Ovary (tissue), 10 donors: ENCODE measurements at regions of chr1 and their contacts with region 1.

Region 1: DNA sequence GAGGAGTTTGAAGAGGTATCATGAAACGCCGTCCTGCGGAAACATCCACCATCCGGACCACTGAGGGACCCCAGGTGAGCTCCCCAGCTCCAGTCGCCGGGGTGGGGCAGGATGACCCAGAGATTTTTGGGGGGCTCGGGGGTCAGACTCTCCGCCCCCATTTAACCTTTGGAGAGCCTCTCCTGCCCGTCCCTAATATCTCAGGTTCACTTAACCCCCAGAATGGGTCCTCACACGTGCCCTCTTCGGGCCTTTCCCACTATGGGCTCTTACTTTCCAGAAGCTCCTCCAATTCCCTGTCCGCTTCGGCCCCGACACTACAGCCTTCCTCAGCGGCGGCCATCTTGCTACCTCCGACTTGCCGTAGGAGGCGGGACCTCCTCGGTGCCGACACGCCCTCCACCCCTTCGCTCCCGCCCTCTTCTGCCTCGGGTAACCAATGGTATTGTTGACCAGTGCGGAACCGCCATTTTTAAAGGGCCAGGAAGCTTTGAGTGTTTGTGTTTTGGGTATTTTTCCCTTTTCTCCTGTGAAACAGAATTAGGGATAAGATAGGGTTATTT is at the start of gene PEX19:
- DNase-seq: peak; percentile 90 to 96 (median 94)
- H3K4me3 ChIP-seq: peak within 1 kb of the TSS; percentile 82
- H3K27ac ChIP-seq: peak within 1 kb of the TSS; percentile 78 to 80
- H3K4me1 ChIP-seq: peaks cover 7% of the 10 kb centered on the region
- H3K27me3 ChIP-seq: no peaks in the 10 kb centered on the region
- CTCF ChIP-seq: no peak
- EP300 ChIP-seq: no peak
- POLR2A ChIP-seq: peak; percentile 76
- total RNA-seq, gene PEX19: 40.1 to 91.7 (median 70.6) TPM

Region 2: DNA sequence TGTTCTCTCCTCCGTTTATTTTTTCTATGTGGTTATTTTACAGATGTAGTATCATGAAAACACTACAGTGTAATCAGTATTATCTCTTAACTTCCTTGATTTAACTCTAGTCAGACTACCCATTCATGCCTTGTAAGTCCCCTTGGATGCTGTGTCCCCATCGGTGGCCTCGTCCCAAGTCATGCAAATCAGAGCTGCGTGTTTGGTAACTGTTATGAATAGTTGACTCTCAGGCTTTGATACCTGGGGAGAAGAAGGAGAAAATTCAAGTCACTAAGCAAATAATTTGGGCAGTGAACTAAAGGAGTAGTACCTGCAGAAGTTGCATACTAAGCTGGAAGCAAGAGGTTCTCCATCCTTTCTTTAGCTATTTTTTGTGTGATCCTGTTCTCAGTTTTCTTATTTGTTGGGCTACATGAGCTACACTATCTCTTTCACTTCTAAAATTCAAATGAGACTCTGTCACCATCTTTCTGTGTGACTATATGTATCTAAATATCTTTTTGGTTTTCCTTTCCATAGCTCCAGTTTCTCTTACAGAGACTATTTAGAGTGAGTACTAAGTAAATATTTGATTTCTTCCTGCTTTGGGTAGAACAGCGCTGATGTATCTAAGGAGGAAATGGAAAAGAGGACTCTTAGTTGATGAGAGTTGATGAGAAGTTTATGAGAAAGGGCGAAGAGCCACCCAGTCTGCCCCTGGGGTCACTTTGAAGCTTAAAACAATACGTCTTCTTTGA is 166.4 kb after region 1 on chr1:
- intact Hi-C with region 1: no loop called
- DNase-seq: no peak
- H3K4me3 ChIP-seq: no peak overlapping the region
- H3K27ac ChIP-seq: no peak overlapping the region
- H3K4me1 ChIP-seq: no peaks in the 10 kb centered on the region
- H3K27me3 ChIP-seq: no peaks in the 10 kb centered on the region
- CTCF ChIP-seq: no peak
- EP300 ChIP-seq: no peak
- POLR2A ChIP-seq: no peak

Region 3: DNA sequence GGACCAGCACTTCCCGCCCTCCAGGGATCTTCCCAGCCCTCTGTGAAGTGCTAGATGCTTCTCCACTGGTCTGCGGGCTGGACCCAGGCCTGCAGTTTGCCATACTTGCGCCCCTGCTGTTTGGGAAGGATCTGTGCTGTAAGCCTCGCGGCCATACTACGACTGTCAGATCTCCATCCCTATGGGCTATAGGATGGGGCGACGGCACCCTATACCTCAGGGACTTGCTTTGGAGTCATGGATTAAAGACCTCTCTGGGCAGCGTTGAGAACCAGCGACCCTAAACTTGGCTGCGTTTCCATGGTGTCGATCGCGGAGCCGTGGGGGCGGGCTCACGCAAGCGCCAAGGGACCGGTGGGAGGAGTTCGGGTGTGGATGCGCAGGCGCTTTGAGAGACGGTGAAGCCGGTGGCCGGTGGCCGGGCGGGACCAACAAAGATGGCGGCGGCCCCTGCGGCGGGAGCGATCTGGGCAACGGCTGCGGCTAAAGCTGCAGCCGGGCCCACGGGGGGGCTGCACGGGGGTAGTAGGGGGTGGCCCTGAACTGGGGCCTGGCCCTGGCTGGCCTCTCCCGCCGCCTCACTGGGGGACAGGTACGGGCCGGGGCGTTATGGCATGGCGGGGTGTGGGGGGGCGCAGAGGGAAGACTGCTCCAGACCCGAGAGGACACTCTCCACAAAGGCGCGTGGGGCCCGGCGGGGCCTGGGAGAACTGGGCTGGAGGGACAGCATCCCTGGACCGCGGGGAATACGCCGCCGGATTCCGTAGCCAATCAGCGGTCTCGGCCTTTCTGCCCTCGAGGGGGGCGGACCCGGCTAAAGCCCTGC is 874.4 kb after region 1 on chr1 and contains the start of gene USP21:
- intact Hi-C with region 1: loop called in 1 of 4 experiments (anchors 10 kb)
- DNase-seq: peak; percentile 92 to 96 (median 95)
- H3K4me3 ChIP-seq: peak within 1 kb of the TSS; percentile 84
- H3K27ac ChIP-seq: peak within 1 kb of the TSS; percentile 68 to 89
- H3K4me1 ChIP-seq: peaks cover 14% of the 10 kb centered on the region
- H3K27me3 ChIP-seq: no peaks in the 10 kb centered on the region
- CTCF ChIP-seq: peak in 1 of 3 donors; percentile 52
- EP300 ChIP-seq: no peak
- POLR2A ChIP-seq: peak; percentile 57
- total RNA-seq, gene USP21: 16.7 to 41.9 (median 38.5) TPM